Endothelial cell of umbilical vein (primary cell): ENCODE measurements at regions of chr1 and their contacts with region 1.

Region 1: DNA sequence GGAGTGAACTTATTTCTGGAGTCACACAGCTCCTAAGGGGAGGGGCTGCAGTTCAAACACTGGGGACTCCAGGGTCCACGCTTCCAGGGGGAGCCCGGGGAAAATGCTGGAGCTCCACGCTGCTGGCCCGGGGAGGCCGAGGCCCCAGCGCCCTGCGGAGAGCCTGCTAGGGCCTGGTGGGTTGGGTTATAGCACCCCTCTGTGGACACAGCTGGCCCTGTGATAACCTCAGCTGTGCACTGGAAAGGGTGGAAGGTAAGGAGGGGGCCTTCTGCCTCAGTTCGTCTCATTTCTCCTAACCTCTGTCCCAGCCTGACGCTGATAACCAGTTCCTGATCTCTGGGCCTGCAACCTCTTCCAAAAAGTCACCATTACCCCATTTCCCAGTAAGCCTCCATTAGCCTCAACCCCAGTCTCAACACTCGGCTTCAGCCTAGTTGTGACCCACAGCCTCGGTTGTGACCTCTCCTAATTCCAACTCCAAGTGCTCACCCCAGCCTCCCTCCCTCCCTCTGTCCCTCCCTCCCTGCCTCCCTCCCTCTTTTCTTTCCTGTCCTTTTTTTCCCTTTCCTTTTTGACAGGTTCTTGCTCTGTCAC is 7.1 kb downstream of the NBL1 start:
- DNase-seq: peak; percentile 49
- H3K4me3 ChIP-seq: no peak overlapping the region
- H3K27ac ChIP-seq: peak overlapping the region; percentile 65
- H3K4me1 ChIP-seq: peaks cover 14% of the 10 kb centered on the region
- H3K27me3 ChIP-seq: no peaks in the 10 kb centered on the region
- CTCF ChIP-seq: peak; percentile 78 to 85
- POLR2A ChIP-seq: no peak

Region 2: DNA sequence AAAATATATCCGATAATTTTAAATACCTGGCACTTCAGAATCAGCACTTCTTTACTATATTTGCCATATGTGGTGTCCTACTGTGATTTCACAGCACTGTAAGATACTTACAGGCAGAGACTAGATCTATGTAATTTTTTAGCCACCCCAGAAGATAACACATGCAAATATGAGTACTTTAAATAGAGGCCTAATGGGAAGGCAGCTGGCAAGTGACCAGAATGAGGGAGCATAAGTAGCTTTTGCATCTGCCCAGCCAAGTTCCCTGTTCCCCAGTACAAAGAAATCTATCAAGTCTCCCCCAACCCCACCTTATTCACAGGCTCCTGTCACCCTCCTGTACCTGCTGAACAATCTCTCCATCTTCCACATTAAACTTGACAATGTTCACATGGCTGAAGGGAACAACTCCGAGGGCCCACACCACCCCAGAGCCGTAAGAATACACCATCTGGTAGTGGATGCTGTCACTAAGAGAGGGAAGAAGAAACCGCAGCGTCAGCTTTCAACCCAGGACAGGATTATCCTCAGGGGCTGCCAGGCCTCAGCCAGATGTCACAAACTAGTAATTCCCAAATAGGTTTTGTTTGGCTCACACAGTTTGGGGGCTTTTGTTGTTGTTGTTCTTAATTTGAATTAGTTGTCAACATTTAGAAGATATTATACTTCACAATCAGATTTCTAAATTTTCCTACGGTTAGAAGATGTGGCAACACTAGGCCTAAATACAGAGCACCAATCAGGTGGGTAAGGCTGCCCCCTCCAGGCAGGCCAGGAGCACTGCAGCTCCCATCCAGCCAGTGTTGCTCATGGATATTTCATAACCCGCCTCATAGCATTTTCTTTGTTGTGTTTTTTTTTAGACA is 410.3 kb before region 1 on chr1:
- CTCF ChIA-PET with region 1: interaction called, 14 read pairs
- POLR2A ChIA-PET with region 1: interaction called, 11 read pairs
- dilution Hi-C with region 1: no loop called
- intact Hi-C with region 1: no loop called
- DNase-seq: peak; percentile 54
- H3K4me3 ChIP-seq: no peak overlapping the region
- H3K27ac ChIP-seq: no peak overlapping the region
- H3K4me1 ChIP-seq: no peaks in the 10 kb centered on the region
- H3K27me3 ChIP-seq: no peaks in the 10 kb centered on the region
- CTCF ChIP-seq: peak; percentile 89
- POLR2A ChIP-seq: no peak

Region 3: DNA sequence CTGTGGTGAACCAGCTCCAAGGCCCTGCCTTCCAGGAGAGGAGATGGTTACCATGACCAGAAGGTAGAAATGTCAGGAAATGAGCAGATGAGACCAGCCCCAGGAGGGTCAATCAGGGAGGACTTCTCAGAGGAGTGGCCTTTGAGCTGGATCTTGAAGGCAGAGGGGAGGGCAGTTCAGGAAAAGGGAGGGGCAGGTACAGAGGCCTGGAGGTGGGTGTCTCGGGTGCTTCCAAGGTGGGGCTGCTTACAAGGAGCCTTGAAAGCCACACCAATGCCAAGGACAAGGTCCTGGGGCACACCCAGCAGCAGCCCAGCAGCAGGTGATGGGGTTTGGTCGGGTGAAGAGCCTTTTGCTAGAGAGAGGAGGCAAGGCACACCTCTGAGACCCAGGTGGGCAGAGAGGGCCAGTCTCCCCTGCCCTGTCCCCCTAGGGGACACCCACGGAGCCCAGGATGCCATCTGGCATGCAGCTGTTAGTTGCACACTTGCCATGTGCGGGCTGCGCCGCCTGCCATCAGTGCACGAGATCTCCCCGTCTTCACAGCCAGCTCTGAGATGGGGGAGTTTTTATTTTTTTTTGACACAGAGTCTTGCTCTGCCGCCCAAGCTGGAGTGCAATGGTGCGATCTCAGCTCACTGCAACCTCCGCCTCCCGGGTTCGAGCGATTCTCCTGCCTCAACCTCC is 320.6 kb before region 1 on chr1:
- CTCF ChIA-PET with region 1: interaction called, 10 read pairs
- POLR2A ChIA-PET with region 1: no interaction called
- dilution Hi-C with region 1: no loop called
- intact Hi-C with region 1: no loop called
- DNase-seq: no peak
- H3K4me3 ChIP-seq: no peak overlapping the region
- H3K27ac ChIP-seq: no peak overlapping the region
- H3K4me1 ChIP-seq: no peaks in the 10 kb centered on the region
- H3K27me3 ChIP-seq: no peaks in the 10 kb centered on the region
- CTCF ChIP-seq: no peak
- POLR2A ChIP-seq: no peak

Region 4: DNA sequence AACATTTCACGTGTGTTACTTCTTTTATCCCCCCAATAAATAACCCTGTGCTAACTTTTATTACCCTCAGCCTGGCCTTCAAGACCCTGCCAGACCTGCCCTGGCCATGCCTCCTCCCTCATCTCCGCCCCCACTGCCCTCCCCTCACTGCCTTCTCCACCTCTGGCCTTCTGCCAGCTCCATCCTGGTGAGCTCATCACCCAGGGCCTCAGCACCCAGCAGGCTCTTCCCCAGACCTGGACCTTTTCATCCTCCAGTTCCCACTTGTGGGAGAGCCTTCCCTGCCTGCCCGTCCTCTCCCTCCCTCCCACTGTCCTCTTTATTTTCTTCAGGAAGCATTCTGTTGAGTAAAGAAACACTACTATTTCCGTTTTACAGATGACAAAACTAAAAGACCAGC is 267.1 kb before region 1 on chr1:
- CTCF ChIA-PET with region 1: interaction called, 9 read pairs
- POLR2A ChIA-PET with region 1: no interaction called
- dilution Hi-C with region 1: no loop called
- intact Hi-C with region 1: loop called (anchors 1 kb)
- DNase-seq: no peak
- H3K4me3 ChIP-seq: no peak overlapping the region
- H3K27ac ChIP-seq: no peak overlapping the region
- H3K4me1 ChIP-seq: peaks cover 21% of the 10 kb centered on the region
- H3K27me3 ChIP-seq: no peaks in the 10 kb centered on the region
- CTCF ChIP-seq: no peak
- POLR2A ChIP-seq: no peak

Region 5: DNA sequence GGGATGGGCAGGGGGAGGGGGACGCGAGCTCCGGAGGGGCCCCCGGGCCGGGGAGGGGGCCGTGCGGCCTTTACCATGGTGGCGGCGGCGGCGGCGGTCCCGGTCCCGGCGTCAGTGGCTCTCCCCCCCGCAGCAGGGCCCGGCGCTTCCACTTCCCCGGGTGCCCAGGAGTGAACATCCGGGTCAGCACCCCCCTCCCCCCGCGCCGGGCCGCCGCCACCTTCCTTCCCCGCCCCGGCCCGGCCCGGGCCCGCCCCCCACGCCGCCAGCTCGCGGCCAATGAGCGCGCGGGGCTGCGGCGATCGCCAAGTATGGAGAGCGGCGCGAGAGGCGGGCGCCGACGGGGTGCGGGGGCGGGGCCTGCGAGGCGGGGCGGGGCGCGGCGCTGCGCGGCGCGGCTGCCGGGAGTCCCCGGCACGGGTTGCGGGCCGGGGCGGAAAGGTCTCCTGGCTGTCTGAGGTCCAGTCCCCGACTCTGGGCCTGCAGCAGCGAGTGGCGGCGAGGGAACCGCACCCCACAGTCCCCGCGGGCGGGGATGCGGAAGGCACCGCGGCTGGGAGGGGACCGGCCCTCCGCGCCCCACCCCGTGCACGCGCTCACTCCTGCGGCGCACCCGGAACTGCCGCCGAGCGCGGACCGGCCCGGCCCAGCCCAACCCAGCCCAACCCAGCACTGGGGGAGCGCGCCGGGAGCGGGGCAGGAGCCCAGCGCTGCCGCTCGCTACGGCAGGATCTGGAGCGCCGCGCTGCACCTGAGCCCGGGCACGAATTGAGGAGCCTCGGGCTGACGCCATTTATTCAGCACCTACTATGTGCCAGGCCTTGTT is 165.7 kb before region 1 on chr1 and contains the start of gene CAPZB:
- CTCF ChIA-PET with region 1: interaction called, 16 read pairs
- POLR2A ChIA-PET with region 1: no interaction called
- dilution Hi-C with region 1: no loop called
- intact Hi-C with region 1: loop called (anchors 1 kb)
- DNase-seq: peak; percentile 79
- H3K4me3 ChIP-seq: peak within 1 kb of the TSS; percentile 69 to 98 (median 72)
- H3K27ac ChIP-seq: peak within 1 kb of the TSS; percentile 91
- H3K4me1 ChIP-seq: peaks cover 35% of the 10 kb centered on the region
- H3K27me3 ChIP-seq: no peaks in the 10 kb centered on the region
- CTCF ChIP-seq: no peak
- POLR2A ChIP-seq: peak; percentile 62
- total RNA-seq, gene CAPZB: 339 and 347 TPM in 2 replicates